Endothelial cell of umbilical vein (primary cell): ENCODE measurements at regions of chr14 and their contacts with region 1.

Region 1: GRCh38 chr14:70816525-70816924 is 7.2 kb upstream of the MAP3K9 start:
- DNase-seq: no peak
- H3K4me3 ChIP-seq: no peak overlapping the region
- H3K27ac ChIP-seq: no peak overlapping the region
- H3K4me1 ChIP-seq: no peaks in the 10 kb centered on the region
- H3K27me3 ChIP-seq: peaks cover 28 to 33% of the 10 kb centered on the region in 2 experiments
- CTCF ChIP-seq: no peak
- POLR2A ChIP-seq: no peak

Region 2: DNA sequence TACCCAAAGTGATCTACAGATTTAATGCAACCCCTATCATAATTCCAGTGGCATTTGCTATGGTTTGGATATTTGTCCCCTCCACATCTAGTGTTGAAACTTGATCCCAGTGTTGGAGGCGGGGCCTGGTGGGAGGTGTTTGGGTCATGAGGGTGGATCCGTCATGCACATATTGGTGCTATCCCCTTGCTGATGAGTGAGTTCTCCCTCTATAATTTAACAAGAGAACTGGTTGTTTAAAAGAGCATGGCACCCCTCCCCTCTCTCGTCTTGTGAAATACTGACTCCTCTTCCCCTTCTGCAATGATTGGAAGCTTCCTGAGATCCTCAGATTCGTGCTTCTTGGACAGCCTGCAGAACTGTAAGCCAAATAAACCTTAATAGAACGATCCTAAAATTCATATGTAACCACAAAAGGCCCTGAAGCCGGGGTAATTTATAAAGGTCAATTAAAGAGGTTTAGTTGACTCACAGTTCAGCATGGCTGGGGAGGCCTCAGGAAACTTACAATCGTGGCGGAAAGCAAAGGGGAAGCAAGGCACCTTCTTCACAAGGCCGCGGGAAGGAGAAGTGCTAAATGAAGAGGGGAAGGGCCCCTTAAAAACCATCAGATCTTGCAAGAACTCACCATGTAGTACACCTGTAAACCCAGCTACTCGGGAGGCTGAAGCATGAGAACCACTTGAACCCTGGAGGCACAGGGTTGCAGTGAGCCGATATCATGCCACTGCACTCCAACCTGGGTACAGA is 1376.8 kb before region 1 on chr14:
- CTCF ChIA-PET with region 1: no interaction called
- POLR2A ChIA-PET with region 1: no interaction called
- dilution Hi-C with region 1: no loop called
- intact Hi-C with region 1: no loop called
- DNase-seq: no peak
- H3K4me3 ChIP-seq: no peak overlapping the region
- H3K27ac ChIP-seq: no peak overlapping the region
- H3K4me1 ChIP-seq: peaks cover 5% of the 10 kb centered on the region
- H3K27me3 ChIP-seq: no peaks in the 10 kb centered on the region
- CTCF ChIP-seq: no peak
- POLR2A ChIP-seq: no peak

Region 3: DNA sequence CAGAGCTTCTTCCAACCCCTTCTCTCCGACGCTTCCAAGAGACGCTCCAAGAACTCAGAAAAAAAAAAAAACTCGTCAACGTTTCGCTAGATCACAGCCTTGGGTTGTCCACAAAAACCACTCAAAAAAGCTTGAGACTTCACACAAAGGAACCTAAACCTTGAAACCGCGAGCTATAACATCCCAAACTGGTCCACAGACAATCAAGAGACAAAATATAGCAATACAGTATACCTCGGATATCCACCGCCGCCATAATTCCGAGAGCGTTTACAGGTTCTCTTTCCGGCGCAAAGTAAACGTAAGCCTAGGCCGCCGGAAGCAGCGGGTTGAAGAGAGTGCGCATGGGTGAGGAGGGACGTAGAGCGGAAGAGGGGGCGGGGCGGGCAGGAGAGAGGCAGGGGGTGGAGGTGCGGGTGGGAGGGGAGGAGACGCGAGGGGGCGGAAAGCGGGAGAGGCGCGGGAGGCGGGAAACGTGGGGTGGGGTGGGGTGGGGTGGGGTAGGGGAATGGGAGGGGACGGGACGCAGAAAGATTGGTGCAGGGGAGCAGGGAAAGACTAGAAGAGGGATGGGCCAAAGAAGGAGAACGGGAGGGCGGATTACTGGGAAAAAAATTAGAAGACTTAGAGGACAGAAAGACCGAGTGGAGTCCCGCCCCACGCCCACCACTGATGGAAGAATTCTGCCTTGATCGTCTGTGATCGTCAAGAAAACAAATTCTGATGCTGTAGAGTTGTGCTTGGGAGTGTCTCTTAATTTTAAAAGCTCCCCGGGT is 216.0 kb before region 1 on chr14 and contains the start of gene MED6:
- CTCF ChIA-PET with region 1: no interaction called
- POLR2A ChIA-PET with region 1: no interaction called
- dilution Hi-C with region 1: no loop called
- intact Hi-C with region 1: no loop called
- DNase-seq: peak; percentile 91
- H3K4me3 ChIP-seq: peak within 1 kb of the TSS; percentile 86 to 98 (median 92)
- H3K27ac ChIP-seq: peak within 1 kb of the TSS; percentile 78
- H3K4me1 ChIP-seq: peaks cover 13% of the 10 kb centered on the region
- H3K27me3 ChIP-seq: no peaks in the 10 kb centered on the region
- CTCF ChIP-seq: no peak
- POLR2A ChIP-seq: peak; percentile 29
- total RNA-seq, gene MED6: 38.8 and 41.5 TPM in 2 replicates

Region 4: GRCh38 chr14:70622111-70622712 is 194.3 kb before region 1 on chr14:
- CTCF ChIA-PET with region 1: interaction called, 3 read pairs
- POLR2A ChIA-PET with region 1: no interaction called
- dilution Hi-C with region 1: no loop called
- intact Hi-C with region 1: loop called (anchors 2 kb)
- DNase-seq: peak; percentile 45
- H3K4me3 ChIP-seq: no peak overlapping the region
- H3K27ac ChIP-seq: no peak overlapping the region
- H3K4me1 ChIP-seq: no peaks in the 10 kb centered on the region
- H3K27me3 ChIP-seq: peaks cover 0 to 3% of the 10 kb centered on the region in 2 experiments
- CTCF ChIP-seq: peak; percentile 40 to 55
- POLR2A ChIP-seq: no peak

Region 5: GRCh38 chr14:70721542-70721941 is 95.0 kb before region 1 on chr14:
- CTCF ChIA-PET with region 1: no interaction called
- POLR2A ChIA-PET with region 1: no interaction called
- dilution Hi-C with region 1: no loop called
- intact Hi-C with region 1: no loop called
- DNase-seq: no peak
- H3K4me3 ChIP-seq: no peak overlapping the region
- H3K27ac ChIP-seq: no peak overlapping the region
- H3K4me1 ChIP-seq: no peaks in the 10 kb centered on the region
- H3K27me3 ChIP-seq: no peaks in the 10 kb centered on the region
- CTCF ChIP-seq: no peak
- POLR2A ChIP-seq: no peak

Region 6: GRCh38 chr14:70796551-70796950 is 20.0 kb before region 1 on chr14:
- CTCF ChIA-PET with region 1: no interaction called
- POLR2A ChIA-PET with region 1: no interaction called
- dilution Hi-C with region 1: no loop called
- intact Hi-C with region 1: no loop called
- DNase-seq: no peak
- H3K4me3 ChIP-seq: no peak overlapping the region
- H3K27ac ChIP-seq: no peak overlapping the region
- H3K4me1 ChIP-seq: no peaks in the 10 kb centered on the region
- H3K27me3 ChIP-seq: no peaks in the 10 kb centered on the region
- CTCF ChIP-seq: no peak
- POLR2A ChIP-seq: no peak